ENCODE measurements at regions of chr1 and their contacts with region 1.

Region 1: GRCh38 chr1:24688621-24689195 is 45.6 kb downstream of the SRRM1 start:
- DNase-seq: peak; percentile 71
- H3K4me3 Mint-ChIP-seq: no peak overlapping the region
- H3K27ac Mint-ChIP-seq: no peak overlapping the region
- H3K4me1 Mint-ChIP-seq: no peaks in the 10 kb centered on the region
- H3K27me3 Mint-ChIP-seq: no peaks in the 10 kb centered on the region

Region 2: DNA sequence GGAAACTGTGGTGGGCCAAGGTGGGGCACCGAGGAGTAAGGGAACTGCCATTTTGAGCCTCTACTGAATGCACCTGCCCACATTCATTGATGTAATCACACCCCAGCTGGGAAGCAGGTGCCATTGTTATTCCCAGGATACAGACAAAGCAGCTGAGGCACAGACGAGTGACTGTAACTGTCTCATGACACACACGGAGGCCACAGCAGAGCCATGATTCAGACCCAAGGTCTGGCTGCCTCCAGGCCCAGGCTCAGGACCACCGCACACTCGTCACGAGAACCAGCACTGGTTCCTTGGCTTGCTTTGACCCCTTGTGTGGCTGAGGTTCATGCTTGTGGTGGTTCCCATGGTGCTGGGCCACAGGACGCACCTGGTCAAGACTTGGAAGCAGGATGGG is 10.9 kb after region 1 on chr1:
- CTCF ChIA-PET with region 1: interaction called, 12 read pairs
- POLR2A ChIA-PET with region 1: interaction called, 3 read pairs
- intact Hi-C with region 1: no loop called
- DNase-seq: no peak
- H3K4me3 Mint-ChIP-seq: no peak overlapping the region
- H3K27ac Mint-ChIP-seq: no peak overlapping the region
- H3K4me1 Mint-ChIP-seq: peaks cover 1% of the 10 kb centered on the region
- H3K27me3 Mint-ChIP-seq: peaks cover 3% of the 10 kb centered on the region

Region 3: DNA sequence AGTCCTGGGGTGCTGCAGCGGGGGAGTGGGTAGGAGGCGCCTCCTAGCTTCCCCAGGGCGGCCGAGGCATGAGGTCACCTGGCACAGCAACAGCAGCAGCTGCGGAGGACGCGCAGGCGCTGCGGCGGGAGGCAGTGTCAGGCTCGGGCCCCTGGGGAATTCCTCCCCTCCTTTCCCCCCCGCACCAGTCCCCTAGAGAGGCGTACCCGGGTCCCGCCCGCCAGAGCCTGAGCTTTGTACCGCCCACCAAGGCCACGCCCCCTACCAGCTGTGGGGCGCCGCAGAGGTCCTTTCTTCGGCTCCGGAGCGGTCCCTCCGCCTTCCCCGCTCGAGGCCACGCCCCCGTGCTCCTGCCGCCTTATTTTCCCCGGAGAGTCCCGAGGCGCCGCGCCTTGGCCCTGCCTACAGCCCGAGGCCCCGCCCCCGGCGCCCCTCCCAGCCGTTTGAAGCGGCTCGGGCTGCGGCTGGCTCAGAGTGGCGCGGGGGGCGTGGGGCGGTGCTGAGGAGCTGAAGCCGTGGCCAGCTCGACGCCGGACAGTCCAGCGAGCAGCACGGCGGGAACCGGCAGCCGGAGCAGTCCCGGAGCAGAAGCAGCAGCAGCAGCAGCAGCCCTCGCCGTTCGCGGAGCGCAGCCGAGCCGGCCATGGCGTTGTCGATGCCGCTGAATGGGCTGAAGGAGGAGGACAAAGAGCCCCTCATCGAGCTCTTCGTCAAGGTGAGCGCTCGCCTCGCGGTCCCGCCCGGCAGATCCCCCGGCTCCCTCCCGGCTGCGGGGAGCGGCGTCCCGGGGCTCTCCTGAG is 56.4 kb after region 1 on chr1 and contains the start of gene CLIC4:
- CTCF ChIA-PET with region 1: interaction called, 10 read pairs
- POLR2A ChIA-PET with region 1: interaction called, 3 read pairs
- intact Hi-C with region 1: loop called (anchors 10 kb)
- DNase-seq: peak; percentile 100
- H3K4me3 Mint-ChIP-seq: peak within 1 kb of the TSS; percentile 76
- H3K27ac Mint-ChIP-seq: peak within 1 kb of the TSS; percentile 58
- H3K4me1 Mint-ChIP-seq: peaks cover 34% of the 10 kb centered on the region
- H3K27me3 Mint-ChIP-seq: no peaks in the 10 kb centered on the region
- total RNA-seq, gene CLIC4: 25.5 to 26.3 TPM

Region 4: DNA sequence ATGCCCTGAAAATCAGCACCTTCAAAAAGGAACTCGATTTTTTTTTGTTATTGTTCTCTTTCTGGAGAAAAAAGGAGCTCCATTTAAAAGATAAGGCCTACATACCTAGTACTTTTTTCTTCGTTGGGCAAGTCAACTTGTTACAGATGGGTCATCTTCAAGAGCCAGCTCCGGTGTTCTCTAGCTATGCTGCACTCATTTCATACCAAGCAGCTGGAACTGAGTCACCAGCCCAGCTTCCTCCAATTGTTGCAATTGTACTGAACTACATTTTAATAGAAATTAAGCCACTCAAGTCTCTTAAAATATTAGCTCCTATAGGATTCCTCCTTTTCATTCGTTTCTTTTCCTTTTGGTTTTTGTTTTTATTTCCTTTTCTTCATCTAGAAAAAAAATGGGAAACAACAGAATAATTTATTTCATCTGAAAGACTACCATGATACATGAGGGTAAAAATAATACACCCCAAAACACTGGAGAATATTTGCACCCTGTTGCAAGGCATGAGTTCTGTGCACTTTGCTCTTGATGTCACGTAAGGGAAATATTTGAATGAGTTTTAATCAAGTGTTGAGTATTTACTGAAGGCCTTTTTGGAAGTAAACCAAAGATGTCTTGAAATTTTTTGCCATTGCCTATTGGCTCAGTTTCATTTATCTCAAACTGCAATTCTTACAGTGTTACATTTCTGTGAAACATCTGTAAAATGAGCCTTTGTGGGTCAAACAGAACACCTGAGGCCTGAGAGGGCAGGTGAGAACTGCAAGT is 117.0 kb after region 1 on chr1:
- CTCF ChIA-PET with region 1: interaction called, 12 read pairs
- POLR2A ChIA-PET with region 1: no interaction called
- intact Hi-C with region 1: no loop called
- DNase-seq: no peak
- H3K4me3 Mint-ChIP-seq: no peak overlapping the region
- H3K27ac Mint-ChIP-seq: no peak overlapping the region
- H3K4me1 Mint-ChIP-seq: no peaks in the 10 kb centered on the region
- H3K27me3 Mint-ChIP-seq: no peaks in the 10 kb centered on the region

Region 5: GRCh38 chr1:24830680-24831272 is 142.1 kb after region 1 on chr1:
- CTCF ChIA-PET with region 1: interaction called, 299 read pairs
- POLR2A ChIA-PET with region 1: no interaction called
- intact Hi-C with region 1: loop called (anchors 2 kb)
- DNase-seq: no peak
- H3K4me3 Mint-ChIP-seq: no peak overlapping the region
- H3K27ac Mint-ChIP-seq: no peak overlapping the region
- H3K4me1 Mint-ChIP-seq: no peaks in the 10 kb centered on the region
- H3K27me3 Mint-ChIP-seq: peaks cover 4% of the 10 kb centered on the region

Region 6: GRCh38 chr1:25204797-25205480 is 516.2 kb after region 1 on chr1:
- CTCF ChIA-PET with region 1: interaction called, 13 read pairs
- POLR2A ChIA-PET with region 1: no interaction called
- intact Hi-C with region 1: no loop called
- DNase-seq: no peak
- H3K4me3 Mint-ChIP-seq: no peak overlapping the region
- H3K27ac Mint-ChIP-seq: no peak overlapping the region
- H3K4me1 Mint-ChIP-seq: no peaks in the 10 kb centered on the region
- H3K27me3 Mint-ChIP-seq: peaks cover under 1% of the 10 kb centered on the region